Caco-2 (cell line): ENCODE measurements at regions of chrX and their contacts with region 1.

Region 1: GRCh38 chrX:106302242-106302662 is 134.1 kb downstream of the PWWP3B start:
- DNase-seq: peak in 1 of 2 experiments; percentile 47
- H3K4me3 ChIP-seq: no peak overlapping the region
- H3K4me3 Mint-ChIP-seq: no peak overlapping the region
- H3K27ac Mint-ChIP-seq: peak overlapping the region; percentile 81
- H3K4me1 ChIP-seq: peaks cover 13% of the 10 kb centered on the region; the same call in 1 of the 2 replicates
- H3K4me1 Mint-ChIP-seq: peaks cover 10% of the 10 kb centered on the region
- H3K27me3 ChIP-seq: no peaks in the 10 kb centered on the region
- H3K27me3 Mint-ChIP-seq: no peaks in the 10 kb centered on the region
- CTCF ChIP-seq: no peak

Region 2: GRCh38 chrX:106249706-106250379 is 52.4 kb before region 1 on chrX:
- CTCF ChIA-PET with region 1: no interaction called
- POLR2A ChIA-PET with region 1: no interaction called
- intact Hi-C with region 1: loop called (anchors 10 kb)
- DNase-seq: no peak
- H3K4me3 ChIP-seq: no peak overlapping the region
- H3K4me3 Mint-ChIP-seq: no peak overlapping the region
- H3K27ac Mint-ChIP-seq: no peak overlapping the region
- H3K4me1 ChIP-seq: no peaks in the 10 kb centered on the region
- H3K4me1 Mint-ChIP-seq: peaks cover 10% of the 10 kb centered on the region
- H3K27me3 ChIP-seq: no peaks in the 10 kb centered on the region
- H3K27me3 Mint-ChIP-seq: no peaks in the 10 kb centered on the region
- CTCF ChIP-seq: no peak